Endothelial cell of umbilical vein (primary cell): ENCODE measurements at regions of chr2 and their contacts with region 1.

Region 1: DNA sequence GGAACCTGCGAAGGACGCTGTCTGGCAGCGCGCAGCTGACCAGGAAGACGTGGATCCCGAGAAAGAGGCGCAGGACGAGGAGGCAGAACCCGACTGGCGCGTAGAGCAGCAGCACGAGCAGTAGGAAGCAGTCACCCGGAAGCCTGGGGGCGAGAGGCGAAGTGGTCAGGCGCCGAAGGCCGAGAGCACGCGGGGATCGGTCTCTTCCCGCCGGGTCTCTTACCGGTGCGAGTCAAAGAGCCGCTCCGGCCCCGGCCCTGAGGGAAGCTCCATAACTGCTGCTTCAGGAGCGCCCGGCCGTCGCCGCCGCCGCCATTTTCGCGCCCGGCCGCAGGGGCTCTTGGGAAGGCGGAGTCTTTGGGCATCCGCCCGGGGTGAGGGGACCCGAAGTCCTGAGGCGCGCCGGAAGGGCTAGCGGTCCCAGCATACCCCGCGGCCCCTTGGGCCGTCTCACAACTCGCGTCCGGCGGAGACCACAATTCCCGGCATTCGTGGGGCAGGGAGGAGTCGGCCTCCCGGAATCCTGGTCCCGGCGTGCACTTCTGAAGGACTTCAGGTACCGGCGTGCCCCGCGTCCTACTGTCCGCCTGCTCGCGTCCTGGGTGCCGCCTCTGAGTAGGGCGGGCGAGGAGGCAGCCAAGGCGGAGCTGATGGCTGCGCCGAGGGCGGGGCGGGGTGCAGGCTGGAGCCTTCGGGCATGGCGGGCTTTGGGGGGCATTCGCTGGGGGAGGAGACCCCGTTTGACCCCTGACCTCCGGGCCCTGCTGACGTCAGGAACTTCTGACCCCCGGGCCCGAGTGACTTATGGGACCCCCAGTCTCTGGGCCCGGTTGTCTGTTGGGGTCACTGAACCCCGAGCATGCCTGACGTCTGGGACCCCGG is at the starts of genes AUP1 and HTRA2:
- DNase-seq: peak; percentile 97
- H3K4me3 ChIP-seq: peak within 1 kb of the TSS; percentile 77 to 90 (median 81)
- H3K27ac ChIP-seq: peak within 1 kb of the TSS; percentile 74
- H3K4me1 ChIP-seq: peaks cover 20% of the 10 kb centered on the region
- H3K27me3 ChIP-seq: no peaks in the 10 kb centered on the region
- CTCF ChIP-seq: no peak
- POLR2A ChIP-seq: peak; percentile 96
- total RNA-seq, gene AUP1: 103 and 109 TPM in 2 replicates
- total RNA-seq, gene HTRA2: 32.6 and 34.3 TPM in 2 replicates

Region 2: GRCh38 chr2:74250189-74250631 is 279.4 kb before region 1 on chr2:
- CTCF ChIA-PET with region 1: interaction called, 5 read pairs
- POLR2A ChIA-PET with region 1: no interaction called
- dilution Hi-C with region 1: no loop called
- intact Hi-C with region 1: loop called (anchors 2 kb)
- DNase-seq: peak; percentile 37
- H3K4me3 ChIP-seq: no peak overlapping the region
- H3K27ac ChIP-seq: no peak overlapping the region
- H3K4me1 ChIP-seq: no peaks in the 10 kb centered on the region
- H3K27me3 ChIP-seq: peaks cover 0 to 2% of the 10 kb centered on the region in 2 experiments
- CTCF ChIP-seq: peak; percentile 61 to 77
- POLR2A ChIP-seq: no peak

Region 3: GRCh38 chr2:74458132-74458925 is 71.3 kb before region 1 on chr2 and contains the start of gene WBP1:
- CTCF ChIA-PET with region 1: interaction called, 8 read pairs
- POLR2A ChIA-PET with region 1: interaction called, 3 read pairs
- dilution Hi-C with region 1: no loop called
- intact Hi-C with region 1: loop called (anchors 1 kb)
- DNase-seq: peak; percentile 100
- H3K4me3 ChIP-seq: peak within 1 kb of the TSS; percentile 80 to 87 (median 82)
- H3K27ac ChIP-seq: peak within 1 kb of the TSS; percentile 51
- H3K4me1 ChIP-seq: peaks cover 22% of the 10 kb centered on the region
- H3K27me3 ChIP-seq: peaks cover 0 to under 1% of the 10 kb centered on the region in 2 experiments
- CTCF ChIP-seq: no peak
- POLR2A ChIP-seq: peak; percentile 66
- total RNA-seq, gene WBP1: 44.5 and 50.5 TPM in 2 replicates

Region 4: GRCh38 chr2:74498500-74499266 is 30.9 kb before region 1 on chr2:
- CTCF ChIA-PET with region 1: interaction called, 6 read pairs
- POLR2A ChIA-PET with region 1: interaction called, 4 read pairs
- dilution Hi-C with region 1: no loop called
- intact Hi-C with region 1: loop called (anchors 5 kb)
- DNase-seq: peak; percentile 35
- H3K4me3 ChIP-seq: peak overlapping the region in 2 of 3 experiments; percentile 19 to 25
- H3K27ac ChIP-seq: no peak overlapping the region
- H3K4me1 ChIP-seq: peaks cover 30% of the 10 kb centered on the region
- H3K27me3 ChIP-seq: peaks cover 23 to 40% of the 10 kb centered on the region in 2 experiments
- CTCF ChIP-seq: no peak
- POLR2A ChIP-seq: no peak

Region 5: DNA sequence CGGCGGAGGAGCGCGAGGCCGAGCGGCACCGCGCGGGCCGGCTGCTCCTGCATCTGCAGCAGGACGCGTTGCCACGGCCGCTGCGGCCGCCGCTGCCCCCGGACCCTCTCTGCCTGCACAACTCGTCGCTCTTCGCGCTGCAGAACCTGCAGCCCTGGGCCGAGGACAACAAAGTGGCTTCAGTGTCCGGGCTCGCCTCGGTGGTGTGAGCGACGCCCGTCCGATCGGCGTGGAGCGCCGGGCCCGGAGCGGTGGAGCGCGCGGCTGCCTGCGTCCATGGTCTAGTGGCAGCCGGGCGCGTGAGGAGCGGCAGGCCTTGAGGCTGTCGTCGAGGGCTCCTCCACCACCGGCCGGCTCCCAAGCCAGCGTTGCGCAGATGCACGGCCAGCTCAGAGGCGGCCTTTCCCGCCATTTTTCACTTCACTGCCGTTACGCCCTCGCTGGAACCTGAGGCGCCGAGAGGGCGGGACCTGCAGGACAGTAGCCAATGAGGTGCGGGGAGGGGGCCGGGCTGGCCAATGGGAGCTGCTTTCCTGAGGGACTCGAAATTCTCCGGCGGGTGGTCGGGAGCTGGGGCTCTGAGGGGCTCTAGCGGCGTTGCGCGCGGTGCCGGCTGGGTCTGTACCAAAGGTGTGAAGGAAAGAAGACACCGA is 13.5 kb before region 1 on chr2:
- CTCF ChIA-PET with region 1: interaction called, 3 read pairs
- POLR2A ChIA-PET with region 1: interaction called, 5 read pairs
- dilution Hi-C with region 1: no loop called
- intact Hi-C with region 1: loop called (anchors 1 kb)
- DNase-seq: peak; percentile 61
- H3K4me3 ChIP-seq: no peak overlapping the region
- H3K27ac ChIP-seq: no peak overlapping the region
- H3K4me1 ChIP-seq: peaks cover 7% of the 10 kb centered on the region
- H3K27me3 ChIP-seq: peaks cover 82 to 96% of the 10 kb centered on the region in 2 experiments
- CTCF ChIP-seq: no peak
- POLR2A ChIP-seq: no peak

Region 6: DNA sequence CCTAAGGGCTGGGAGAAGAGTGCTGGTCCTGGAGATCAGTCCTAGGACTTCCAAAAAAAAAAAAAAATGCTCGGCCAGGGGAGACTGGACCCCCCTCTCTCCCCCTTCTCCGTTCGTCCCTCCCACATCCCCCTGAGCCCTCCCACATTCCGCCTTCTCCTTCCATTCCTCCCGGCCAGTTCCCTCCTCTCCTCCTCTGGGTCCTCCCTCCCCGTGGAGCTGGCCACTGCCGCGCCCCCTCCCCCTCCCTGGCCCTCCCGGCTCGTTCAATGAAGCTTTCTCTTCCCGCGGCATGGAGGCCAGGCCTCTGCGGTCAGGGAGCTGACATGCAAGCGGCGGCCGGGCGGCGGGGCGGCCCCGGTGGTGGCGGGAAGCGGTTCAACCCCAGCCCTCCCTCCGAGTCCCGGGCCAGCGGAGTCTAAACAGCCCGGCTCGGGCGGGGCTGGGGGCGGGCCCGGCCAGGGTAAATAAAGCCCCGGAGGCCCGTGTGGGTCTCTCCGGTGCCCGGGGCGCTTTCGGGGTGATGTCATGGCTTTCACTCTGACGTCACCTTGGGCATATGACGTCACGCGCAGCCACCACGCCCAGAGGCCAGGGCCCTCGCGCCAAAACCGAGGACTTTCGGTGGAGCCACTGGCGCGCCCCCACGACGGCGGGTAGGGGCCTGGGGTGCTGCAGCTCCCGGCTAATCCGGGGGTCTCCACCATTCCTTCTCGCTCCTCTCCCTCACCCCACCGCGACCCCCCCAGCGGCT is 24.5 kb after region 1 on chr2 and contains the start of gene LOXL3:
- CTCF ChIA-PET with region 1: interaction called, 4 read pairs
- POLR2A ChIA-PET with region 1: no interaction called
- dilution Hi-C with region 1: no loop called
- intact Hi-C with region 1: loop called (anchors 1 kb)
- DNase-seq: peak; percentile 69
- H3K4me3 ChIP-seq: peak within 1 kb of the TSS; percentile 77 to 84 (median 79)
- H3K27ac ChIP-seq: peak within 1 kb of the TSS; percentile 47
- H3K4me1 ChIP-seq: peaks cover 10% of the 10 kb centered on the region
- H3K27me3 ChIP-seq: no peaks in the 10 kb centered on the region
- CTCF ChIP-seq: no peak
- POLR2A ChIP-seq: no peak
- total RNA-seq, gene LOXL3: 0.95 and 0.97 TPM in 2 replicates